ENCODE measurements at regions of chr1 and their contacts with region 1.

Region 1: GRCh38 chr1:44721485-44722361 is 9.2 kb downstream of the RNU5D-1 start:
- DNase-seq: peak; percentile 91 to 98 (median 94)
- ATAC-seq: peak; percentile 97
- H3K4me3 ChIP-seq: no peak overlapping the region
- H3K27ac ChIP-seq: peak overlapping the region; percentile 95
- H3K4me1 ChIP-seq: peaks cover 17 to 24% of the 10 kb centered on the region in 2 experiments
- H3K27me3 ChIP-seq: peaks cover 2 to 12% of the 10 kb centered on the region in 2 experiments; a peak in 4 of 5 replicates
- CTCF ChIP-seq: no peak; a peak in 2 of 6 replicates
- EP300 ChIP-seq: peak; percentile 86
- POLR2A ChIP-seq: peak; percentile 100
- RAD21 ChIP-seq: peak in 1 of 2 experiments; percentile 56; a peak in 2 of 4 replicates

Region 2: GRCh38 chr1:44546403-44547053 is 175.2 kb before region 1 on chr1:
- CTCF ChIA-PET with region 1: no interaction called
- POLR2A ChIA-PET with region 1: no interaction called
- in situ Hi-C with region 1: no loop called
- intact Hi-C with region 1: no loop called
- DNase-seq: peak; percentile 39 to 61 (median 44)
- ATAC-seq: peak; percentile 83
- H3K4me3 ChIP-seq: no peak overlapping the region
- H3K27ac ChIP-seq: no peak overlapping the region
- H3K4me1 ChIP-seq: peaks cover 0 to 6% of the 10 kb centered on the region in 2 experiments; a peak in 1 of 5 replicates
- H3K27me3 ChIP-seq: peaks cover 54 to 79% of the 10 kb centered on the region in 2 experiments
- CTCF ChIP-seq: peak; percentile 66 to 75 (median 68)
- EP300 ChIP-seq: no peak
- POLR2A ChIP-seq: no peak
- RAD21 ChIP-seq: peak; percentile 18 to 75; a peak in 3 of 4 replicates

Region 3: DNA sequence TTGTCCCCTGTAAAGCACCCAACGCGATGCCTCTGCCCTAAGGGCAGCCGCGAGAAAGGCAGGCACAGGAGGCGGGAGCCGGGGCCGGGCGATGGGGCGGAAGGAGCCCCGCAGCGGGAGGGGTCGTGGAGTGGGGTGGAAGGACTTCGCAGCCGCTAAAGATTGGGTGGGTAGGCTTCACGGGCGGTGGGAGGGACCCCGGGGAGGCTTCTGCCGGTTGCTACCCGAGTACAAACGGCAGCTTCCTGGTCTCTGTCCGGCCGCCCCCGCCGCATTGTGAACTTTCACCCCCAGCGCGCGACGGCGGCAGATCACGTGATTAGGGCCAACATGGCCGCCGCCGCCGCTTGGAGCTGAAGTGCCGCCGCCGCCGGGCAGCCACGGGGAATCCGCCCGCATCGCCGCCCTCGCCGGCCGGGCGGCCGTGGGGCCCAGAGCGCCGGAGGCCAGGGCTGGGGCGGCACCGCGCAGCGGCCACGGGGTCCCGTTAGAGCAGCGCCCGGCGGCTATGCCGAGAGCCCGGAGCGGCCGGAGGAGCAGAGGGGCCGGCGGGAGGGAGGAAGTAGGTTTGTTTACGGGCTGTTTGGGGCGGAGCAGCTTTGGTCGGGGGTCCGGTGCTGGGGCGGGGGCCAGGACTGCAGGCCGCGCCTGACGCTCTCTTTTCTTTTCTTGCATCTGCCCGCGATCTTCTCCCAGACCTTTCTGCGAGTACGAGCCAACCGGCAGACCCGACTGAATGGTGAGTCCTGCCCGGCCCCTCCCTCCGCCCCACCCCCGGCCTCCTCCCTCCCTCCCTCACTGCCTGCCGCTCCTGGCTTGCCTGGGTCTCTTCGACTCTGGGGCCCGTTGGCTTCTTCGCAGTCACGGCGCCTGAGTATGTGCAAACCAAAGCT is 89.8 kb before region 1 on chr1:
- CTCF ChIA-PET with region 1: no interaction called
- POLR2A ChIA-PET with region 1: interaction called, 21 read pairs
- in situ Hi-C with region 1: no loop called
- intact Hi-C with region 1: no loop called
- DNase-seq: peak; percentile 95 to 96 (median 96)
- ATAC-seq: peak; percentile 87
- H3K4me3 ChIP-seq: peak overlapping the region; percentile 78
- H3K27ac ChIP-seq: peak overlapping the region; percentile 90
- H3K4me1 ChIP-seq: peaks cover 49 to 60% of the 10 kb centered on the region in 2 experiments; a peak in 4 of 5 replicates
- H3K27me3 ChIP-seq: no peaks in the 10 kb centered on the region
- CTCF ChIP-seq: 0 out of 6 replicates have a peak, but pooled peaks of 1 of the 3 experiments have one; percentile 3
- EP300 ChIP-seq: no peak; the same call in 1 of the 2 replicates
- POLR2A ChIP-seq: peak; percentile 89
- RAD21 ChIP-seq: no peak

Region 4: DNA sequence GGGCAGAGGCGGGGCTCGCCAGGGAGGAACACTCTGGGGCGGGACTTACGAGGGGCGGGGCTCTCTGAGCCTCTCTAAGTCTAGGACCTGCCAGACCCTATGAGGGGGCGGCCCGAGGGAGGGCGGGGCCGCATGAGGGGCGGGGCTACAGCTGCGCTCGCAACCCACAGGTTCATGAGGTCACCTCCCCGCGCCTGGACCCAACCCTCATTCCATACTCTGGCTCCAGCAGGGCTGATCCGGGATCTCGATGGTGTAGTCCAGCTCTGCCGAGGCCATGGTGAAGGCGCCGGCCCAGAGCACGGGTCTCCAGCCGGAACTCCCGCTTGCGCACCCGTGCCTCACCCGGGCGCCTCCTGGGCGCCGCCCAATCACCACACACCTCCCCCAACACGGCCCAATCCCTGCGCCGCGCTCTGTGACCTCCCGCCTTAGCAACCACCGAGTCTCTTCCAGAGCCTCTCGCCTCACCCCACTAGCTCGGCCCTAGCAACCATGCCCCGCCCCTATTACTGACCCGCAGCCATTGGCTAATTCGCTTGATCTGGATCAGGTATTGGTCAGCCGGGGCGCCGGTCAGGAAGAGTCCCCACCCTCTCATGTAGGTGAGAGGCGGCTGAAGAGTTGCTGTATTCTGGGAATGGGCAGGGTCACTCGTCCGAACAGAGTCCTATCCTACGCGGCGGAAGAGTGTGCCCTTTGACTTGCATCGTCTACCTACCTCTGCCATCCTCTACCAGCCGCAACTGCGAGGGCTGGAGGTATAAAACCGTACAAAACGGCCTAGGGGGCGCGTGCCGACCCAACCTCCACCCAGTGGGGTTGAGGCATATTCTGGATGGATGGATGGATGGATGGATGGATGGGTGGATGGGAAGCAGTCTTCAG is 47.4 kb before region 1 on chr1 and contains the starts of genes ARMH1 and TMEM53:
- CTCF ChIA-PET with region 1: no interaction called
- POLR2A ChIA-PET with region 1: interaction called, 40 read pairs
- in situ Hi-C with region 1: no loop called
- intact Hi-C with region 1: no loop called
- DNase-seq: peak; percentile 99 to 100 (median 100)
- ATAC-seq: peak; percentile 97
- H3K4me3 ChIP-seq: peak within 1 kb of the TSS; percentile 54
- H3K27ac ChIP-seq: peak within 1 kb of the TSS; percentile 77
- H3K4me1 ChIP-seq: peaks cover 23 to 37% of the 10 kb centered on the region in 2 experiments
- H3K27me3 ChIP-seq: no peaks in the 10 kb centered on the region; a peak in 1 of 5 replicates
- CTCF ChIP-seq: no peak
- EP300 ChIP-seq: peak; percentile 41; the same call in 1 of the 2 replicates
- POLR2A ChIP-seq: peak; percentile 87
- RAD21 ChIP-seq: no peak
- polyA plus RNA-seq, gene ARMH1: not detected
- polyA plus RNA-seq, gene TMEM53: 0.23 to 1.9 TPM

Region 5: DNA sequence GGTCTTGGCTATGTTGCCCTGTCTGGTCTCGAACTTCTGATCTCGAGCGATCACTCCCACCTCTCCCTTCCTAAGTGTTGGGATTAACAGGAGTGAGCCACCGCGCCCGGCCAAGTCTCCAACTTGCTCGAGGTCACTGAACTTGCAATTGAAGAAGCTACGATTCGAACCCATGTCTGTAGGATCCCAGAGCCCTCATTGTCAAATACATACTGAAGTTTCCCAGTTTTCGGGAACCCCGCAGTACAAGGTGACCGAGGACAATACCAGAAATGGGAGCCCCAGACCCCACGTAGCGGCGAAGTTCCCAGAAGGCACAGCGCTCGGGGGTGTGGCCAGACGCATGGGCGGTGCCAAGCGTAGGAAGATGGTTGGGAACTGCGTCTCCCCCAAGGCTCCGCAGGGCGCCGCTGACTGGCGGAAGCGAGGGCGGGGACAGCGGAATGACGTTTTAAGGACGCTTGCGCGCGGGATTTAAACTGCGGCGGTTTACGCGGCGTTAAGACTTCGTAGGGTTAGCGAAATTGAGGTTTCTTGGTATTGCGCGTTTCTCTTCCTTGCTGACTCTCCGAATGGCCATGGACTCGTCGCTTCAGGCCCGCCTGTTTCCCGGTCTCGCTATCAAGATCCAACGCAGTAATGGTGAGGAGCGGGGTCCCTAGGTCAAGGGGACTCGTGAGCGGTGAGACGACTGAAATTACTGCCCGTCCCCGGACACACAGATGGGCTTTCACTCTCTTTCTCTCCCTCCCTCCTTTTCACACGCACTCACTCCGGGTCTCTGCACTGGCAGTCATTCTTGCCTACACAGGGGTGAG is 17.8 kb after region 1 on chr1 and contains the start of gene KIF2C:
- CTCF ChIA-PET with region 1: no interaction called
- POLR2A ChIA-PET with region 1: interaction called, 328 read pairs
- in situ Hi-C with region 1: no loop called
- intact Hi-C with region 1: no loop called
- DNase-seq: peak; percentile 97 to 100 (median 98)
- ATAC-seq: peak; percentile 98
- H3K4me3 ChIP-seq: peak within 1 kb of the TSS; percentile 68
- H3K27ac ChIP-seq: peak within 1 kb of the TSS; percentile 95
- H3K4me1 ChIP-seq: peaks cover 13 to 22% of the 10 kb centered on the region in 2 experiments; a peak in 4 of 5 replicates
- H3K27me3 ChIP-seq: no peaks in the 10 kb centered on the region
- CTCF ChIP-seq: peak in 2 of 3 experiments; percentile 15 to 25; a peak in 3 of 6 replicates
- EP300 ChIP-seq: peak; percentile 54
- POLR2A ChIP-seq: peak; percentile 98
- RAD21 ChIP-seq: no peak
- polyA plus RNA-seq, gene KIF2C: 84.9 to 161 TPM

Region 6: GRCh38 chr1:44799770-44800584 is 78.3 kb after region 1 on chr1 and contains the start of gene PLK3:
- CTCF ChIA-PET with region 1: no interaction called
- POLR2A ChIA-PET with region 1: interaction called, 66 read pairs
- in situ Hi-C with region 1: no loop called
- intact Hi-C with region 1: no loop called
- DNase-seq: peak; percentile 92 to 99 (median 96)
- ATAC-seq: peak; percentile 93
- H3K4me3 ChIP-seq: peak within 1 kb of the TSS; percentile 77
- H3K27ac ChIP-seq: peak within 1 kb of the TSS; percentile 69
- H3K4me1 ChIP-seq: peaks cover 23 to 53% of the 10 kb centered on the region in 2 experiments
- H3K27me3 ChIP-seq: no peaks in the 10 kb centered on the region; a peak in 1 of 5 replicates
- CTCF ChIP-seq: peak; percentile 94 to 96 (median 95)
- EP300 ChIP-seq: no peak; the same call in 1 of the 2 replicates
- POLR2A ChIP-seq: peak; percentile 91
- RAD21 ChIP-seq: peak; percentile 91 to 96
- polyA plus RNA-seq, gene PLK3: 0.52 to 1.9 TPM

Region 7: DNA sequence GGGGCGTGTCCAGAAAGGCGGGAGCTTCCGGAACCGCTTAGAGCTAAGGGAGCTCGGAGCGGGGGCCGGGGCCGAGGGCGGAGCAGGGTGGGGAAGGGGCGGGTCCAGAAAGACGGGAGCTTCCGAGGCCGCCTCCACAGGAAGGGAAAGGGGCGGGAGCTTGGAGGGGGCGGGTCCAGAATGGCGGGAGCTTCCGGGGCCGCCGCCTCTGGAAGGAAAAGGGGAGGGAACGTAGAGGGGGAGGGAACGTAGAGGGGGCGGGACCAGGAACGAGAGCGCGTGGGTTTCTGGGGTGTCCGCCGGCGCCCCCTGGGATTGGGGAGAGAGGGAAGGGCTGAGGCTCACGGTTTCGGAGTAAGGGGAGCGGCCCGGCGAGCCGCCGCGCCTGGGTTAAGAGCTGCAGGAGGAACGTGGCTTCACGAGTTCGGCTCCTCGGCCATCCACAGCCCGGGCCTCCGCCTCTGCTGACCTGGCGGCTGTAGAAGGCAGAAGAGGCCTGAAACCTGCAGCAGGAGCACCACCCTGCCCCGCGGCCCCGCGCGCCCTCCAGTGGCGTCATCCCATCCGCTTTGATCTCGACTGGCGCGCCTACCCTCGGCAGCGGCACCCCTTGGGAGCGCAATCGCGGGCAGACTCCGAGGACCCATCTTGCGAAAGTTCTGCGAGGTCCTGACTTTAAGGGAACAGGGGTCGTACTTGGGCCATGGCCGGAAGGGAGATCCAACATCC is 582.0 kb after region 1 on chr1:
- CTCF ChIA-PET with region 1: no interaction called
- POLR2A ChIA-PET with region 1: interaction called, 11 read pairs
- in situ Hi-C with region 1: loop called (anchors 10 kb)
- intact Hi-C with region 1: no loop called
- DNase-seq: peak; percentile 99
- ATAC-seq: peak; percentile 93
- H3K4me3 ChIP-seq: peak overlapping the region; percentile 52
- H3K27ac ChIP-seq: peak overlapping the region; percentile 88
- H3K4me1 ChIP-seq: peaks cover 24% of the 10 kb centered on the region in 2 experiments
- H3K27me3 ChIP-seq: no peaks in the 10 kb centered on the region
- CTCF ChIP-seq: peak; percentile 95 to 99 (median 95)
- EP300 ChIP-seq: peak; percentile 31; the same call in 1 of the 2 replicates
- POLR2A ChIP-seq: peak; percentile 97
- RAD21 ChIP-seq: peak; percentile 93 to 94